ENCODE measurements at regions of chr19 and their contacts with region 1.

Region 1: DNA sequence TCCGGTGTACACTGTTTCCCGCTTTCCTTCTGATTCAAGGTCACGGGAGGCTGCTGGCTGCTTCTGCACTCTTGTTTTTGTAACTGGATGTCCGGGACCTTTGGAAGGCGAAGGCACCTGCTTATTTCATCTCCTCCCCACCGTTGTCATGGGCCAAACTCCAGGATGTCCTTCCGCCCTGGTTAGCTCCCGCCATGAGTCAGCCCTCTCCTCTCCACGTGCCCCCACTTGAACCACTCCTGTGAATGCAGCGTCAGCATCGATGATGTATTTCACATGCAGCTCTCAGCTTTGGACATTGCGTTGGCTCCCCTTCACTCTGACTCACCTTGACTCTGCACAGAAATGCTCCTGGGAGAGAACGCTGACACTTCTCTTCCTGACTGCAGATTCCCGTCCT is 5.5 kb upstream of the GALP start:
- DNase-seq: no peak
- H3K4me3 ChIP-seq: no peak overlapping the region
- H3K27ac ChIP-seq: no peak overlapping the region
- H3K4me1 ChIP-seq: no peaks in the 10 kb centered on the region
- H3K27me3 ChIP-seq: peaks cover 6% of the 10 kb centered on the region
- CTCF ChIP-seq: no peak

Region 2: GRCh38 chr19:55913643-55914268 is 256.5 kb before region 1 on chr19:
- intact Hi-C with region 1: no loop called
- DNase-seq: no peak
- H3K4me3 ChIP-seq: no peak overlapping the region
- H3K27ac ChIP-seq: no peak overlapping the region
- H3K4me1 ChIP-seq: no peaks in the 10 kb centered on the region
- H3K27me3 ChIP-seq: no peaks in the 10 kb centered on the region
- CTCF ChIP-seq: no peak

Region 3: GRCh38 chr19:56076498-56076897 is 93.8 kb before region 1 on chr19:
- intact Hi-C with region 1: loop called (anchors 2 kb)
- DNase-seq: peak; percentile 68
- H3K4me3 ChIP-seq: no peak overlapping the region
- H3K27ac ChIP-seq: no peak overlapping the region
- H3K4me1 ChIP-seq: peaks cover 7% of the 10 kb centered on the region
- H3K27me3 ChIP-seq: no peaks in the 10 kb centered on the region
- CTCF ChIP-seq: peak; percentile 79

Region 4: GRCh38 chr19:56105090-56105701 is 65.1 kb before region 1 on chr19:
- intact Hi-C with region 1: loop called (anchors 2 kb)
- DNase-seq: peak; percentile 92
- H3K4me3 ChIP-seq: peak overlapping the region; percentile 20
- H3K27ac ChIP-seq: peak overlapping the region; percentile 75
- H3K4me1 ChIP-seq: peaks cover 25% of the 10 kb centered on the region
- H3K27me3 ChIP-seq: no peaks in the 10 kb centered on the region
- CTCF ChIP-seq: peak; percentile 69

Region 5: DNA sequence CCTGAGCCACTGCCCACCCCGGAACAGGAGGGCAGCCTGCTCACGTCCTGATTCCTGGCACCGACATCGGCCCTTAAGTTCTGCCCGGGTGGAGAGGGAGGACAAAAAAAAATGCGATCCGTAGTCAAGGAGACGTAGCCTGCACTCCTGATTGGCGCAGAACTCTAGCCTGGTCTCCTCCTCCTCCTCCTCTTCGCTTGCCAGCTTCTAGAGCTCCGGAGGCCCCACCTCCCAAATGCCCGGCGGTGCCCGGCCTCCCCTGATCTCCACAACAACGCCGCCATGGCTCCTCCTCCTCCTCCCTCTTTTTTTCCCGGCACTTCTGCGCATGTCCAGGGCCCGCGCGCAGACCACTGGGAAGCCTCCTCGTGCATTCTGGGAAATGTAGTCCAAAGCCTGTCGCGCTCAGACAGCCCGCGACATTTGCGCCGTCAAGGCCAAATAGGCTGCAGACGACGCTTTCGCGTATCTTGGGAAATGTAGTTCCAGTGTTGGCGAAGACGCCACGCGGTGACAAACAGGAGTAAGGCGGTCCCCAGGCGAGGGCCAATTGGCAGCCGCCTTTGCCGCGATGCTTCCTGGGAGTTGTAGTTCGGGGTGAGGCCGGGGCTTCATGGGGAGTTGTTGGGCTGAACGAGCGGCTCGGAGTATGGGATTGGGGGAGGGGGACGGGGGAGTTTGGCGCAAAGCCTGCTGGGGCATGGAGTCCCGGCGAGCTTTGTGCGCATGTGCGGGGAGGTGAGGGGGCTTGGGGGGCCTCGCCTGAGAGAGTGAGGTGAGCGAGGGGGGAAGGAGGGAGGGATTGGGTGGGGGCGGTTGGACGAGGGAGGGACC is 29.5 kb before region 1 on chr19 and contains the start of gene ZNF444:
- intact Hi-C with region 1: no loop called
- DNase-seq: peak; percentile 99
- H3K4me3 ChIP-seq: peak within 1 kb of the TSS; percentile 44
- H3K27ac ChIP-seq: peak within 1 kb of the TSS; percentile 89
- H3K4me1 ChIP-seq: peaks cover 10% of the 10 kb centered on the region
- H3K27me3 ChIP-seq: no peaks in the 10 kb centered on the region
- CTCF ChIP-seq: no peak
- total RNA-seq, gene ZNF444: 20.5 to 50.9 TPM

Region 6: DNA sequence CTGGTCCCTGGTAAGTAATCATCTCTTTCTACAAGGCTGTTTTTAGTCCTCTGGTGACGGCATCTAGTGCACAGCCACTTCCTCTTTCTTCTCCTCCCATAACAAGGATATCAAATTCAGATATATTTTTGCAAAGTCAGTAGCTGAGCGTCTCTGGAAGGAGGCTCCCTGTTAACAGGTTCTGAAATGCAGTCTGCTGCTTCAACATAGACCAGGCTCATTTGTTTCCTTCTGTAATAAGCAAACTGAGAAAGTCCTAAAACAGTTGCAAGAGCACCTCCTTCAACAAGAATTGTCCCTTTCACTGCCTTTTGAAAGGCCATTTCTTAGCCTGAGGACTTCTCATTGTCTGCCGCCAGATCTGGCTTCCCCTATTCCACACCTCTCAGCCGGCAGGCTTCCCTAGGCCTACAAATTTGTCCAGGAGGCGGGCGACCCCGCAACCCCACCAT is 151.8 kb after region 1 on chr19:
- intact Hi-C with region 1: loop called (anchors 10 kb)
- DNase-seq: no peak
- H3K4me3 ChIP-seq: no peak overlapping the region
- H3K27ac ChIP-seq: no peak overlapping the region
- H3K4me1 ChIP-seq: no peaks in the 10 kb centered on the region
- H3K27me3 ChIP-seq: no peaks in the 10 kb centered on the region
- CTCF ChIP-seq: no peak